ENCODE measurements at regions of chr9 and their contacts with region 1.

Region 1: GRCh38 chr9:110452227-110452801 is 114.7 kb upstream of the TXNDC8 start:
- DNase-seq: no peak

Region 2: DNA sequence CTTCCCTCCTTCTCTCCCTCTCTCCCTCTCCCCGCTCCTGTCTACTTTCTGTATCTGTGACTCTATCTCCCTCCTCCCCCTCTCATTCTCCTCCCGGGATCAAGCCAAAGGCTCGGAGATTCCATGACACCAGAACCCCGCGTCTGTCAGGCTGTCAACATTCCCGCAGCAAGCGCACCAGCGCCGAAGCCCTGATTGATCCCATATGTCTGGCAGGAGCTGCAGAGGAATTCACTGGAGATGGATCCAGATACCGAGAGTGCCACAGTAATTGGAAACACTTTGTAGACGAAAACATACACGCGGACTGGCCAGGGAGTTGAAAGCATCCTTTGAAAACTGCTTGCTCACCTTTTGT is 127.5 kb after region 1 on chr9:
- intact Hi-C with region 1: loop called (anchors 10 kb)
- DNase-seq: no peak

Region 3: GRCh38 chr9:110623462-110624025 is 171.2 kb after region 1 on chr9:
- intact Hi-C with region 1: loop called (anchors 5 kb)
- DNase-seq: no peak

Region 4: GRCh38 chr9:110847671-110848070 is 395.4 kb after region 1 on chr9:
- intact Hi-C with region 1: no loop called
- DNase-seq: no peak

Measured in cardiac septum (tissue), 1 donor.